CD8-positive, alpha-beta memory T cell (primary cell): ENCODE measurements at regions of chr3 and their contacts with region 1.

Region 1: DNA sequence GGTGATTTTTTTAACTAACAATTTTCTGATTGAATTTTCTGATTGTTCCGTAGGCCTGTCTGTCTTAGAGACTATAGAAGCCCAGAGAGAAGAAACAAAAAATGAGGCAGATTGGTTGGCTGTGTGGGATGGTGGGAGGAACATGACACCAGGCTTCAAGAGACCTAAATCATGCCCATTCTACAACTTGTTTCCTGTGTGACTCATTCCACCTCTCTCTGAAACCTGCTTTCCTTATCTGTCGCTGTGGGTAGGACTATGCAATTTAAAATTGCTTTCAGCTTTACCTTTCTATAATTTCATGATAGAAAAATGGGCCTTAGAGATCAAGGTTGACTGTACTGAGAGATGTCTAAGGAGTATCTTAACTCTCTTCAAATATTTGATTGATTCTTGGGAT is 44.5 kb downstream of the OXNAD1 start:
- DNase-seq: peak in 4 of 5 donors; percentile 35 to 72 (median 68)
- H3K4me3 ChIP-seq: peak overlapping the region; percentile 12
- H3K4me3 Mint-ChIP-seq: peak overlapping the region; percentile 38 to 82 (median 76)
- H3K27ac ChIP-seq: peak overlapping the region; percentile 13
- H3K27ac Mint-ChIP-seq: peak overlapping the region; percentile 52 to 98 (median 95)
- H3K4me1 ChIP-seq: peaks cover 96% of the 10 kb centered on the region
- H3K4me1 Mint-ChIP-seq: peaks cover 85 to 96% (median 95%) of the 10 kb centered on the region in 3 donors
- H3K27me3 ChIP-seq: no peaks in the 10 kb centered on the region
- H3K27me3 Mint-ChIP-seq: peaks cover 0 to 3% of the 10 kb centered on the region in 2 donors

Region 2: GRCh38 chr3:15098503-15099363 is 1210.8 kb before region 1 on chr3 and contains the start of gene RBSN:
- CTCF ChIA-PET with region 1: no interaction called
- POLR2A ChIA-PET with region 1: no interaction called
- DNase-seq: peak; percentile 94 to 97 (median 95)
- H3K4me3 ChIP-seq: peak within 1 kb of the TSS; percentile 95
- H3K4me3 Mint-ChIP-seq: peak within 1 kb of the TSS; percentile 91 to 97 (median 95)
- H3K27ac ChIP-seq: peak within 1 kb of the TSS; percentile 98
- H3K27ac Mint-ChIP-seq: peak within 1 kb of the TSS; percentile 91 to 100 (median 98)
- H3K4me1 ChIP-seq: peaks cover 18% of the 10 kb centered on the region
- H3K4me1 Mint-ChIP-seq: peaks cover 23 to 34% (median 30%) of the 10 kb centered on the region in 3 donors
- H3K27me3 ChIP-seq: no peaks in the 10 kb centered on the region
- H3K27me3 Mint-ChIP-seq: peaks cover 4 to 8% of the 10 kb centered on the region in 2 donors
- total RNA-seq, gene RBSN: 12.2 to 12.5 TPM

Region 3: DNA sequence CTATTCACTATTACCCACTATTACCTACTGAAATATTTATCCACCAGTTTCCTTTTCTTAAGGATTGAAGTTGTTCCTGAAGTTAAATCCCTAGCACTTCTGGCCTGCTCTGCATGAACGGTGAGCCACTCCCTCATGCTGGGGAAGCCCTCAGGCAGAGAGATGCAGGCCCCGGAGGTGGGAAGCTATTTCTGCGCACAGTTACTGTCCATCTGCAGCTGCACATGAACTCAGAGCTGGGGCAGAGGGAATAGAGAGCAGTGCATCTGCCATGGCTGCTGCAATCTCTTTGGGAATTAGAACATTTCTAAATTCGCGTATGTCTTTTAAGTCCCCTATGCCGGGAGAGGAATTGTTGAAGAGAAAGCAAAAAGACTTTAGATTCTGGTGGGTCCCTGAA is 141.3 kb before region 1 on chr3:
- CTCF ChIA-PET with region 1: no interaction called
- POLR2A ChIA-PET with region 1: no interaction called
- DNase-seq: no peak
- H3K4me3 ChIP-seq: no peak overlapping the region
- H3K4me3 Mint-ChIP-seq: no peak overlapping the region
- H3K27ac ChIP-seq: no peak overlapping the region
- H3K27ac Mint-ChIP-seq: no peak overlapping the region
- H3K4me1 ChIP-seq: no peaks in the 10 kb centered on the region
- H3K4me1 Mint-ChIP-seq: no peaks in the 10 kb centered on the region
- H3K27me3 ChIP-seq: peaks cover 7% of the 10 kb centered on the region
- H3K27me3 Mint-ChIP-seq: peaks cover 26 to 42% of the 10 kb centered on the region in 2 donors

Region 4: DNA sequence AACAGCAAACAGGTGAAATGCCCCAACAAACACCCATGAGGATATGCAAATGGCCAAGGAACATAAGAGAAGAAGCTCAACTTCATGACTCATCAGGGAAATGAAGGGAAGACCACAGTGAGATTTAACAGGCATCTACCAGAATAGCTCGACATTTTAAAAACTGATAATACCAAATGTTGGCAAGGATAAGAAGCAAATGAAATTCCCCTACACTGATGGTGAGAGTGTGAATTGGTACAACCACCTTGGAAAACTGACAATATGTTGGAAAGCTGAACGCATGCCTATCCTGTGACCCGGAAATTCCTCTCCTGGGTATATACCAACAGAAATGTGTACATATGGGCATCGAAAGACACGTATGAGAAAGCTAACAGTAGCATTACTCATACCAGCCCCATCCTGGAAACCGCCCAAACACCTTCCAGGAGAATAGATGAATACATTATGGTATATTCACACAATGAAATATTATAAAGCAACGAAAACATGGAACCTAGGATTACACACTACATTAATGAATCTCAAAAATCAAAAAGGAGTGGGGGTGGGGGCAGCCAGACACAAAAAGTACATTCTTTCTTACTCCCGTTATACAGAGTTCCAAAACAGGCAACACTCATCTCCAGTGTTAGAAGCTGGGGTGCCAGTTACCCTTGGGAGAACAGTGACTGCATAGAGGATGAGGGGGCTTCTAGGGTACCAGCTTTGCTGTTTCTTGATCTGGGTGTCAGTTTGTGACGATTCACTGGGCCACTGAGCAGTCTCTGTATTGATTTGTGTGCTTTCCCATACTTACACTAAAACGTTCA is 187.1 kb after region 1 on chr3:
- CTCF ChIA-PET with region 1: no interaction called
- POLR2A ChIA-PET with region 1: interaction called, 13 read pairs
- DNase-seq: no peak
- H3K4me3 ChIP-seq: no peak overlapping the region
- H3K4me3 Mint-ChIP-seq: peak overlapping the region in 6 of 7 donors; percentile 6 to 68 (median 50)
- H3K27ac ChIP-seq: no peak overlapping the region
- H3K27ac Mint-ChIP-seq: peak overlapping the region; percentile 17 to 96 (median 62)
- H3K4me1 ChIP-seq: peaks cover 47% of the 10 kb centered on the region
- H3K4me1 Mint-ChIP-seq: peaks cover 62 to 83% (median 77%) of the 10 kb centered on the region in 3 donors
- H3K27me3 ChIP-seq: no peaks in the 10 kb centered on the region
- H3K27me3 Mint-ChIP-seq: no peaks in the 10 kb centered on the region

Region 5: DNA sequence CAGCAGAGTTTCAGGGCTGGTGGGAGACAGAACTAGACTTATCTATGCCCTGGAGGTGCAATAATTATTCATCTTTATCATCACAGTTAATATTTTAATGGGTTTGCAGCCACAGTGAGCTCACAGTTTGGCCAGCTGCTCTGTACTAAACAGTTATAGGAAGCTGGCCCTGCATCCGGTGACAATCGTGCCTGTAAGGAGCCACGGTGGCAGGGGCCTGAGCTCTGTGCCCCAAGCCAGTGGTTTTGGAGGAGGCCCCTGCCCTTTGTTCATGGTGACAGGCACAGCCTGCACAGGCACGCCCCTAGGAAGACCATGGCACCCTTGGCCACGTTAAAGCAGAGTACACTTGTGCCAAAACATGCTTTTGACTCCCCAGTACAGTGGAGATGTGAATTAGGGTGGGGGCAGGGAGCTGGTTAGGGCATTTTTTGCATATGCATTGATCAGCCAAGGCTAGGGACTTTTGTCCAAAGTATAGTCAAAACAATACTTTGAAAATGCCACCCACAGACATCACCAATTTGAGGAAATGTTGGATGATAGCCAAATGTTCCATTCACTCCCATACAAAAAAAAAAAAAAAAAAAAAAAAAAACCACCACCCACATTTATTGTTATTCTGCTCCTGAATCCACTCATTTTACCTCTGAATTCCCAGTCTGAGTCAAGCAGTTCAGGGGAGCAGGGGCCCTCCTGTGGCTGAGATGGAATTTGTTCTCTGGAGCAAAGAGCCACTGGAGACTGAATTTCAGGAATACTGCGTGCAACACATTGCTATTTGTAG is 207.3 kb after region 1 on chr3:
- CTCF ChIA-PET with region 1: interaction called, 3 read pairs
- POLR2A ChIA-PET with region 1: interaction called, 10 read pairs
- DNase-seq: peak in 2 of 5 donors; percentile 11 to 59
- H3K4me3 ChIP-seq: no peak overlapping the region
- H3K4me3 Mint-ChIP-seq: peak overlapping the region; percentile 62 to 98 (median 80)
- H3K27ac ChIP-seq: no peak overlapping the region
- H3K27ac Mint-ChIP-seq: peak overlapping the region; percentile 85 to 97 (median 94)
- H3K4me1 ChIP-seq: peaks cover 40% of the 10 kb centered on the region
- H3K4me1 Mint-ChIP-seq: peaks cover 52 to 75% (median 67%) of the 10 kb centered on the region in 3 donors
- H3K27me3 ChIP-seq: no peaks in the 10 kb centered on the region
- H3K27me3 Mint-ChIP-seq: no peaks in the 10 kb centered on the region